Heart right ventricle (tissue), 16 donors: ENCODE measurements at regions of chr4 and their contacts with region 1.

Region 1: GRCh38 chr4:151356510-151356909 is 31.1 kb upstream of the SH3D19 start:
- DNase-seq: no peak
- ATAC-seq: no peak
- H3K4me3 ChIP-seq: no peak overlapping the region
- H3K27ac ChIP-seq: no peak overlapping the region
- H3K4me1 ChIP-seq: no peaks in the 10 kb centered on the region
- H3K27me3 ChIP-seq: no peaks in the 10 kb centered on the region
- CTCF ChIP-seq: no peak

Region 2: GRCh38 chr4:151238477-151238876 is 118.0 kb before region 1 on chr4:
- intact Hi-C with region 1: no loop called
- DNase-seq: no peak
- ATAC-seq: peak in 4 of 8 donors; percentile 33 to 67 (median 56)
- H3K4me3 ChIP-seq: no peak overlapping the region
- H3K27ac ChIP-seq: no peak overlapping the region
- H3K4me1 ChIP-seq: peaks cover 0 to 25% (median 6%) of the 10 kb centered on the region in 9 donors
- H3K27me3 ChIP-seq: no peaks in the 10 kb centered on the region
- CTCF ChIP-seq: peak in 5 of 9 donors; percentile 10 to 43 (median 27)

Region 3: DNA sequence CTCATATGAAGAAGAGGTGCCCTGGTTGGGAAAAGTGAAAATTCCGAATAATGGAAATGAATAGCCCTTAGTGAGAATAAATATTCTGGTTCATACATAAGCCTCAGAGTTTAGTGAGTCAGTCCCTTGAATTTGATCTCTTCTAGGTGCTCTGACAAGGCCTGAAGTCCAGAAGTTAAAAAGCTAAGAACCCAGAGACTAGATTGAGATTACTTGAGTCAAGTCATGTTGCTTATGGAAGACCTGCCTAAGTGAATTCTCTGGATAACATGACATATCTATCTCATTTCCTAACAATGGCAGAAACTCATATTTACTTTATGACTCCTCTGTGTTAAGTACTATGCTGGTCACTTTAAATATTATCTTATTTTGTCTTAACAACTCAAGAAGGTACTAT is 90.0 kb before region 1 on chr4:
- intact Hi-C with region 1: loop called in 2 of 10 experiments (anchors 5 to 10 kb)
- DNase-seq: no peak
- ATAC-seq: no peak
- H3K4me3 ChIP-seq: no peak overlapping the region
- H3K27ac ChIP-seq: no peak overlapping the region
- H3K4me1 ChIP-seq: peaks cover 0 to 27% (median 18%) of the 10 kb centered on the region in 9 donors
- H3K27me3 ChIP-seq: no peaks in the 10 kb centered on the region
- CTCF ChIP-seq: no peak

Region 4: DNA sequence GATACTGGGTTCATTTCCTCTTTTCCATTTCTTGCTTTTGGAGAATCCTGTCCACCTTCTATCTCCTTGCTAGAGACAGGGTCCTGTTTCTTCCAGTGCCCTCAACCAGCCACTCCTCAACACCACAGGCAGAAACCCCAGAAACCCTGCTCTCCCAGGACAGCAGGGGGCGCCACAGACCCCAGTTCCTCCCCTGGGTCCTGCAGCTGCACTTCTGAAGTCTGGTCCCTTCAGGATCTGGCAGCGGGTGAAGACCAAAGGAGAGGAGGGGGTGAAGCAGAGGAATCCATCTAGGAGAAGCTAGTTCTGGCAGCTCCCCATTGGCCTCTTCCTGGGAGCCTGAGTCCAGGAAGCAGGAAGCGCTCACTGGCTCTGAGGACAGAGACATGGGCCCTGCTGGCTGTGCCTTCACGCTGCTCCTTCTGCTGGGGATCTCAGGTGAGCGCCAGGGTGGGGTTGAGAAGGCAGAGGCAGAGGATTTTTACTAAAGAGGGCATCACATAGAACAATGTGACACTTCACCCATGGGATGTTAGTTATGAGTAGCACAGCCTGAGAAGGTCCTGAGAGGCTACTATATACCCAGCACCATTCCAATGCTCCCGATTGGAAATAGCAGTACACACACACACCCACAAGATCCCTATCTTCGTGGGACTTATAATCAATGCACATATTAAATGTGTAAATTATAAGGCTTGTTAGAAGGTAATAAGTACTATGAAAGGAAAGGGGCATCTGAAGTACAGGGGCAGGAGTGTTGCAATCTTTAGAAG is 79.5 kb before region 1 on chr4 and contains the start of gene PRSS48:
- intact Hi-C with region 1: loop called in 4 of 10 experiments (anchors 2 to 10 kb)
- DNase-seq: peak; percentile 57 to 72
- ATAC-seq: peak in 7 of 8 donors; percentile 79 to 89 (median 83)
- H3K4me3 ChIP-seq: no peak within 1 kb of the TSS
- H3K27ac ChIP-seq: no peak within 1 kb of the TSS
- H3K4me1 ChIP-seq: peaks cover 0 to 41% (median 27%) of the 10 kb centered on the region in 9 donors
- H3K27me3 ChIP-seq: no peaks in the 10 kb centered on the region
- CTCF ChIP-seq: peak; percentile 58 to 82 (median 75)
- total RNA-seq, gene PRSS48: not detected

Region 5: DNA sequence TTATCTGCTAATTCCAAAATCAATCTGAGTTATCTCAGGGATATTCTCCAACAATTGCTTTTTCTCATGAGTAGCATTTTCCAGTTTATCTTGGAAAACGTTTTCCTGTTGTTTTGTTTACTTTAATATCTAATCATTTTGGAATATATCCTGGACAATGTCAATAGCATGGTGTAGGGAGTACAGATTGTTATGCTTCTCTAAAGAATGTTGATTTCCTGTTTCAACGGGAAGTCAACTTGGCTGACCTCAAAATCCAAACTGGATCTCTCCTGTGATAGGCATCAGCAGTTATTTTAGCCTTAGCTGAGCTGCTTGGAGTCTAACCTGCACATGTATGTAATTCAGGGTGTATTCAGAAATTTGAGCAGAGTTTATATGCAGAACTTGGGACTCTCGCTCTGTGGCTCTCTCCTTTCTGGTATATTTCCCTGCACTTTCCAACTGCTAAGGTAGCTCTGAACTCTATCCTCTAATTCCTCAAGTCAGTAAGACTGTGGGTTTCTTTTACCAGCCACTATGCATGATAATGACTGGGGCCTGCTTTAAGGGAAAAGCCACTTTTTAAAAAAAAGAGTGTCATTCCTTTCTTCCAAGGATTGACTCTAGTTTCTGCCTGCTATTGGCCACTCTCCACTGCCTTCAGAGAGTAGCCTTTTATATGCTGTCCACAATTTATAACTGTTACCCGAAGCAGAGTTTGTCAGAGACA is 71.8 kb before region 1 on chr4:
- intact Hi-C with region 1: loop called in 3 of 10 experiments (anchors 5 to 10 kb)
- DNase-seq: no peak
- ATAC-seq: peak in 7 of 8 donors; percentile 52 to 80 (median 66)
- H3K4me3 ChIP-seq: no peak overlapping the region
- H3K27ac ChIP-seq: peak overlapping the region in 7 of 10 donors; percentile 24 to 64 (median 49)
- H3K4me1 ChIP-seq: peaks cover 0 to 38% (median 17%) of the 10 kb centered on the region in 9 donors
- H3K27me3 ChIP-seq: no peaks in the 10 kb centered on the region
- CTCF ChIP-seq: no peak

Region 6: DNA sequence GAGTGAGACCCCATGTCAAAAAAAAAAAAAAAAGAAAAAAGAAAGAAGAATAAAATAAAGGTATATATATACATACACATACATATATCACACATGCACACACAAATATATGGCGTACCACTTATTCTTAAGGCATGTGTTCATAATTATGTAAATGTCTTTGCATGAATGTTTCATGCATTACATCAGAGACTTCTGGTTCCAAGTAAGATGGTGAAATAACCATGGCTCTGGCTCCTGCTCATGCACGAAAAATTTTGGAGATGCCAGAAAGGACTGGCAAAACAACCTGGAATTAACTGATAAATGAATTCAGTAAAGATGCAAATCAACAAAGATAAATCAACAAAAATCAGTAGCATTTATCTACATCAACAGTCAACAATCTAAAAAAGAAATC is 32.8 kb after region 1 on chr4:
- intact Hi-C with region 1: no loop called
- DNase-seq: no peak
- ATAC-seq: no peak
- H3K4me3 ChIP-seq: no peak overlapping the region
- H3K27ac ChIP-seq: no peak overlapping the region
- H3K4me1 ChIP-seq: no peaks in the 10 kb centered on the region
- H3K27me3 ChIP-seq: no peaks in the 10 kb centered on the region
- CTCF ChIP-seq: no peak

Region 7: DNA sequence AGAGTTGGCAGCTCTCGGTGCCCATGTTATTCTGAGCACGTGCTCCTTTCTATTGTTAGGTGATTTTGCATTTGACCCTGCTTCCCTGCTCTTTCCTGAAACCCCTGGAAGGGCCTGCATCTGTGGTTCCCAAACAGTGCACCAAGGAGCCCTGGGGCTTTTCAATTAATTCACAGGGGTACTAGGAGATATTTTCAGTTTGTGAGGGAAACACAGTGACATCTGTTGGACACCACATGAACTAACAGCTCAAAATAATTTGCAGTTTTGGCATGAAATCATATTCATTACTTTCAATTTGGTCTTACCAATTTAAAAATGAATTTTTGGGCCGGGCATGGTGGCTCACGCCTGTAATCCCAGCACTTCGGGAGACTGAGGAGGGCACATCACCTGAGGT is 247.7 kb after region 1 on chr4:
- intact Hi-C with region 1: loop called in 3 of 10 experiments (anchors 10 kb)
- DNase-seq: no peak
- ATAC-seq: no peak
- H3K4me3 ChIP-seq: no peak overlapping the region
- H3K27ac ChIP-seq: no peak overlapping the region
- H3K4me1 ChIP-seq: peaks cover 0 to 6% (median 0%) of the 10 kb centered on the region in 9 donors
- H3K27me3 ChIP-seq: no peaks in the 10 kb centered on the region
- CTCF ChIP-seq: peak in 6 of 9 donors; percentile 17 to 49 (median 36)